ENCODE measurements at regions of chr2 and their contacts with region 1.

Region 1: DNA sequence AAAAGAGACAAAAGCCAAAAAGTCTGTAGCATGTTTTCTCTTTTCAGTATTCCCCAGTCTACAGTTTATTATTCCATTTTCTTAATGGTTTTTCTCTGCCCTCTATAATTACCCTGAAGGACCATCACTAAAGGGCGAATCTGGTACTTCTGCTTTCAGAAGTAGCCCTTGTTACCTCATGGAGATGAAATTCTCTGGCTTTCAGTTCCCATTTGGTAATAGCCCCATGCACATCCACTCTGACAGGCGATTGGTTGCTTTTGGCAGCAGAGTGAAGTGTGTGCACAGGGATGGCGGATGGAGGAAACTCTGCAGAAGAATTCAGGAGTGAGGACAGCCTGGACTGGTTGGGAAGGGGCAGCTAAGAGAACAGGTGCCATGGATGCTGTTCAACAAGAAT is 66.3 kb upstream of the NABP1 start:
- DNase-seq: no peak
- H3K4me3 ChIP-seq: no peak overlapping the region
- H3K27ac ChIP-seq: no peak overlapping the region
- H3K4me1 ChIP-seq: no peaks in the 10 kb centered on the region
- H3K27me3 ChIP-seq: no peaks in the 10 kb centered on the region
- CTCF ChIP-seq: no peak

Region 2: DNA sequence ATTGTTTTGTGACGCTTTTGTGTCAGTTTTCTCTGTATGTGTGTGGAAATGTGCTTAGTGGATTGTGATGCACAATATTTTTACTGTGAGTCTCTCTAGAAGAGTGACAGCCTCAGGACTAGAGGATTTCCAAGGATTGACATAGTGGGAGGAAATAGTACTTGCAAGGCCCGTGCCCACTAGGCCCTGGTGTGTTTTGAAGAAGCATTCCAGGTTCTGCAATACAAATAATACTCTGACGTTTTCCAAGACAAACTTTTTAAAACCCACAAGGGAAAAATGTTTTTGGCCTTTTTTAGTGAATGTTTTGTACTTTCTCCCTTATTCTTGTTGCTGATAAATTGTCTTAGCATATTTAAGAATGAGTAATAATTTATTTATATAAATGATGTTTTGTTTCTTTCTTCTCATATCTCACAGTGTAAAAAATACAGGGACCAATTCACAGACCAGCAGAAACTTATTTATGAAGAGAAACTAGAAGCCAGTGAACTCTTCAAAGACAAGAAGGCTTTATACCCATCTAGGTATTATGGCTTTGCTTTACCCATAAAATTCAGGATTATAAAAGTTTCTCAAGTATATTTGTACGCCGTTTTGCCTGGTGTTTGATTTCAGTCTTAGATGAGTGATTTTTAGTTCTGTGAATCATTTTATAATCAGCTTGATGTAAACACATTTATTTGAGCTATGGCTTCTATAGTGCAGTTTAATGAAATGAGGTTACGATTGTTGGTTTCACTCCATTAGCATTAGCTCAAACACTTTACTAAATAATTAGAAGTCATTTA is 200.8 kb before region 1 on chr2:
- CTCF ChIA-PET with region 1: no interaction called
- POLR2A ChIA-PET with region 1: no interaction called
- intact Hi-C with region 1: no loop called
- DNase-seq: no peak
- H3K4me3 ChIP-seq: no peak overlapping the region
- H3K27ac ChIP-seq: no peak overlapping the region
- H3K4me1 ChIP-seq: no peaks in the 10 kb centered on the region
- H3K27me3 ChIP-seq: no peaks in the 10 kb centered on the region
- CTCF ChIP-seq: no peak

Region 3: GRCh38 chr2:191465766-191466420 is 145.7 kb before region 1 on chr2:
- CTCF ChIA-PET with region 1: no interaction called
- POLR2A ChIA-PET with region 1: no interaction called
- intact Hi-C with region 1: no loop called
- DNase-seq: no peak
- H3K4me3 ChIP-seq: no peak overlapping the region
- H3K27ac ChIP-seq: no peak overlapping the region
- H3K4me1 ChIP-seq: no peaks in the 10 kb centered on the region
- H3K27me3 ChIP-seq: no peaks in the 10 kb centered on the region
- CTCF ChIP-seq: no peak

Region 4: DNA sequence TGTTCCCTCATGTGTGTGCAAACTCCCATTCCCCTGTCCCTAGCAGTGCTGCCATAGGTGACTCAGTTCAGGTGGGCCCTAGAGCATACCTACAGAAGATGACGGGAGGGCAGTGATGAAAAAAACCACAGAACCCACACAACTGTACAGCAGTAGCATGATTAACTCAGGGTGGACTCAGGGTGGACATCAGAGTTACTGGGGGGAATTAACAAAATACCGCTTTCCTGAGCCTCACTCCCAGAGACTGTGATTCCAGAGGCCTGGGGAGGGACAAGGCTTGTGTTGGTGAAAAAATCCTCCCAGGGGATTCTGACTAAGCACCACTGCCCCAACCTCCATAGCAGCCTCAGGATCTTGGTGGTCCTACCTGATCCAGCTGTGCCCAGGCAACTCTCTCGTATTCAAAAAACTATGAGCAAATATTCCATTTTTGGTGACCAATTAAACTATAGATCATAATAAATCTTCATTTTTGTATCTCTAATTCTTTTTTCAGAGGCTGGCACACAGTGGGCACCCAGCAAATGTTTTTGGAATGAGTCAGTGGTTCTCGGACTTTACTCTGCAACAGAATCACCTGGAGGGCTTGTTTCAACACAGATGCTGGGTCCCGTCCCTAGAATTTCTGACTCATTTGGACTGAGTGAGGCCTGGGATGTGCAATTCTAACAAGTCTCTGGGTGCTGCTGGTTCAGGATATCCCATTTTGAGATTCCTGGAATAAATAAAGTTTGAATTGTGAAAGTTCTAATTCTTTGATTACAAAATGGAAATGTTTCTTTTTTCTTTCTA is 17.8 kb before region 1 on chr2:
- CTCF ChIA-PET with region 1: no interaction called
- POLR2A ChIA-PET with region 1: no interaction called
- intact Hi-C with region 1: loop called (anchors 2 kb)
- DNase-seq: peak; percentile 59 to 87
- H3K4me3 ChIP-seq: no peak overlapping the region
- H3K27ac ChIP-seq: peak overlapping the region; percentile 91
- H3K4me1 ChIP-seq: peaks cover 21% of the 10 kb centered on the region
- H3K27me3 ChIP-seq: no peaks in the 10 kb centered on the region
- CTCF ChIP-seq: no peak

Region 5: DNA sequence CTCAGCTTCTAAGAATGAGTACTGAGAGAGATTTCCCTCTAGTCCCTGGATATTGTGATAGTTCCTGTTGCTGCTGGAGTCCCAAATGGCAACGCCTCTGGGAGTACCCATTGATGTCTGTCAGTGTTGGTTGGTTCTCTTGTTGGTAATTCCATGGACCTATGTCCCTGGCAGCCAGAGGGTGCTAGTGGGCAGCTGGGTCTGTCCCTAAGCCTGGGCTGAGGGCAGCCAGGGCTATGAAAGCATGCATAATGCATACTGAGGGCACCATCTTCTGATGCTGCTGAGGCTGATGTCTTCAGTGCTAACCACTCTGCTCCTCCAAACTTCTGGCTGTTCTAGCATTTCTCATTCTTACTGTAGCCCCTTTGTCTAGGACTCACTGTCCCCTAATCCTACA is 102.2 kb after region 1 on chr2:
- CTCF ChIA-PET with region 1: no interaction called
- POLR2A ChIA-PET with region 1: interaction called, 10 read pairs
- intact Hi-C with region 1: no loop called
- DNase-seq: no peak
- H3K4me3 ChIP-seq: no peak overlapping the region
- H3K27ac ChIP-seq: no peak overlapping the region
- H3K4me1 ChIP-seq: no peaks in the 10 kb centered on the region
- H3K27me3 ChIP-seq: no peaks in the 10 kb centered on the region
- CTCF ChIP-seq: no peak